HepG2 (cell line): ENCODE measurements at regions of chr20 and their contacts with region 1.

Region 1: GRCh38 chr20:64255361-64256281 is at the start of gene PCMTD2:
- DNase-seq: peak; percentile 86
- ATAC-seq: peak; percentile 89
- H3K4me3 ChIP-seq: peak within 1 kb of the TSS; percentile 68 to 94 (median 80)
- H3K27ac ChIP-seq: peak within 1 kb of the TSS; percentile 78
- H3K4me1 ChIP-seq: peaks cover 66% of the 10 kb centered on the region
- H3K27me3 ChIP-seq: no peaks in the 10 kb centered on the region; a peak in 2 of 5 replicates
- CTCF ChIP-seq: peak; percentile 52
- EP300 ChIP-seq: 0 out of 4 replicates have a peak, but pooled peaks of 1 of the 2 experiments have one; percentile 24
- POLR2A ChIP-seq: peak; percentile 75 to 99; a peak in 3 of 4 replicates
- RAD21 ChIP-seq: peak; percentile 78
- total RNA-seq, gene PCMTD2: 47.0 and 50.5 TPM in 2 replicates

Region 2: DNA sequence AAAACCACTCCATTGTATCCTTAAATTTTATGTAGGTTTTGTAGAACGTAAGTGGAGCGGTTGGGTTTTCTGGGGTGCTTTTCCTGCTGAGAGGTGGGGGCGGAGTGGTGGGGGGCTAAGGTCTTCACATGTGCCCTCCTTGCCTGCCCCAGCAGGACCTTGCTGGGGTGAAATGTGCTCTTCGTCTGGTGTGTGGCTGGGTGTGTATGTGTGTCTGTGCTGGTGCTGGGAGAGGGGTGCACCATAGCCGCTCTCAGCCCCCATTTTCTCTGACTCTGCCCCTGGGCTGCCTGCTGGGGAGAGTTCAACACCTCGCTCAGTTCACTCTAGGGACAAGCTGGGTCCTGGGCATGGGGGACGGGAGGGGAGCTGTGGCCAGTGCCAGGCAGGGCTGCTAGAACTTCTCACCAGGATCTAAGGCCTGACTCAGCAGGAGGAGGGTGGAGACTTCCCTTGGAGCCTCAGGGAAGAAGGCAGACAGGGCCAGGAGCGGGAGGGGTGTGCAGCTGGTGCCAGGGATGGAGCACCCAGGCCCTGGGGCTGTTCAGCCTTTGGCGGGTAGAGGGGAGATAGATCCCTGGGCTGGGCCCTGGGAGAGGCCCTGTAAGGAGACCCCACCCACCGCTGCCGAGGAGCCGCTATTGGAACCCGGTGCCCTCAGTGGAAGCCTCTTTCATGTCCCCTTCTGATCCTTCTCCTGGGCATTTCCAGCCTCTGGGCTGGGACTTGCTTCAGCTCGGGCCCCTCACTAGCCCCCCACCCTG is 211.0 kb before region 1 on chr20:
- CTCF ChIA-PET with region 1: no interaction called
- POLR2A ChIA-PET with region 1: no interaction called
- in situ Hi-C with region 1: no loop called
- intact Hi-C with region 1: no loop called
- DNase-seq: no peak
- ATAC-seq: no peak; the same call in 2 of the 3 replicates
- H3K4me3 ChIP-seq: peak overlapping the region in 1 of 3 experiments; percentile 45; a peak in 1 of 6 replicates
- H3K27ac ChIP-seq: no peak overlapping the region
- H3K4me1 ChIP-seq: peaks cover 56% of the 10 kb centered on the region
- H3K27me3 ChIP-seq: no peaks in the 10 kb centered on the region
- CTCF ChIP-seq: no peak
- EP300 ChIP-seq: no peak
- POLR2A ChIP-seq: no peak
- RAD21 ChIP-seq: no peak

Region 3: DNA sequence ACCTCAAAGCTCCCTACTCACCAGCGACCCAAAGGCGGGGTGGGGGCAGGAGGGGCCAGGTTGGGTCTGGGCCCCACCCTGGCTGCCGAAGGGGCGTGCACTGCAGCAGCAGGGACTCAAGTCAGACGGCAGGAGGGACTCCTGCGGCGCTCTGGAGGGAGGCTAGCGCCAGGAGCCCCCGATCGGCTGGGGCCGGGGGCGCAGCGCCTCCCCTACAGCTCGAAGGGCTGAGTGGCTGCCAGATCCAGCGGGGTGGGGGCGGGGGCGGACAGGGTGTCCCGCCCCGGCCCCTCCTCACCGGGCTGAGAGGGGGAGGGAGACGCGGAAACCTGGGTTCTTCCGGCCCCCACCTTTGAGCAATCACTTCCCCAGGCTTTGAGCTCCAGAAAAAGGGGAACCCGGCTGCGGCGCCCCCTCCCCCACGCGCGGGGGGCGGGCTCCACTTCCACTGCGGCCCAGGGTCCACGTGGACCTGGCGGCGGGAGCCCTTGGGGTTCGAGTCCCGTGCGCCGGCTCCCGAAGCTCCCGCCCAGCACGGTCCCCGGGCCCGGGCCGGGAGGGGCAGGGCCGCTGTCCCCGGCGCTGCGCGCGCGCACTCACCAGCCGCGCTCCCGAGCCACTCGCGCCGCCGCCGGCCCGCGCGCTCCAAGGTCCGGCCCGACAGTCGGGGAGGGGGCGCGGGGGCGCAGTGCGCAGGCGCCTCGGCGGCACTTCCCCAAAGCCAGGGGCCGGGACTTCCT is 176.2 kb before region 1 on chr20 and contains the start of gene RGS19:
- CTCF ChIA-PET with region 1: no interaction called
- POLR2A ChIA-PET with region 1: interaction called, 11 read pairs
- in situ Hi-C with region 1: no loop called
- intact Hi-C with region 1: no loop called
- DNase-seq: peak; percentile 70
- ATAC-seq: peak; percentile 17
- H3K4me3 ChIP-seq: peak within 1 kb of the TSS; percentile 77 to 89 (median 85)
- H3K27ac ChIP-seq: peak within 1 kb of the TSS; percentile 35
- H3K4me1 ChIP-seq: peaks cover 59% of the 10 kb centered on the region
- H3K27me3 ChIP-seq: peaks cover 5 to 15% of the 10 kb centered on the region in 2 experiments; a peak in 4 of 5 replicates
- CTCF ChIP-seq: no peak
- EP300 ChIP-seq: no peak
- POLR2A ChIP-seq: no peak; a peak in 1 of 4 replicates
- RAD21 ChIP-seq: peak; percentile 56; the same call in 1 of the 2 replicates
- total RNA-seq, gene RGS19: 10.2 and 10.7 TPM in 2 replicates

Region 4: GRCh38 chr20:64188682-64189529 is 66.7 kb before region 1 on chr20:
- CTCF ChIA-PET with region 1: no interaction called
- POLR2A ChIA-PET with region 1: interaction called, 44 read pairs
- in situ Hi-C with region 1: no loop called
- intact Hi-C with region 1: loop called (anchors 1 kb)
- DNase-seq: peak; percentile 100
- ATAC-seq: peak; percentile 91
- H3K4me3 ChIP-seq: peak overlapping the region in 1 of 3 experiments; percentile 64; a peak in 2 of 6 replicates
- H3K27ac ChIP-seq: peak overlapping the region; percentile 88
- H3K4me1 ChIP-seq: peaks cover 45% of the 10 kb centered on the region
- H3K27me3 ChIP-seq: peaks cover 3 to 6% of the 10 kb centered on the region in 2 experiments; a peak in 1 of 5 replicates
- CTCF ChIP-seq: no peak; the same call in 1 of the 2 replicates
- EP300 ChIP-seq: peak; percentile 65 to 79; a peak in 3 of 4 replicates
- POLR2A ChIP-seq: no peak
- RAD21 ChIP-seq: no peak

Region 5: GRCh38 chr20:64223526-64224067 is 32.0 kb before region 1 on chr20:
- CTCF ChIA-PET with region 1: no interaction called
- POLR2A ChIA-PET with region 1: interaction called, 47 read pairs
- in situ Hi-C with region 1: no loop called
- intact Hi-C with region 1: no loop called
- DNase-seq: peak; percentile 67
- ATAC-seq: peak; percentile 85
- H3K4me3 ChIP-seq: peak overlapping the region in 2 of 3 experiments; percentile 3 to 58; a peak in 1 of 6 replicates
- H3K27ac ChIP-seq: no peak overlapping the region
- H3K4me1 ChIP-seq: peaks cover 55% of the 10 kb centered on the region
- H3K27me3 ChIP-seq: peaks cover 26 to 86% of the 10 kb centered on the region in 2 experiments
- CTCF ChIP-seq: peak; percentile 98
- EP300 ChIP-seq: peak in 1 of 2 experiments; percentile 30; a peak in 1 of 4 replicates
- POLR2A ChIP-seq: no peak
- RAD21 ChIP-seq: peak; percentile 96

Region 6: DNA sequence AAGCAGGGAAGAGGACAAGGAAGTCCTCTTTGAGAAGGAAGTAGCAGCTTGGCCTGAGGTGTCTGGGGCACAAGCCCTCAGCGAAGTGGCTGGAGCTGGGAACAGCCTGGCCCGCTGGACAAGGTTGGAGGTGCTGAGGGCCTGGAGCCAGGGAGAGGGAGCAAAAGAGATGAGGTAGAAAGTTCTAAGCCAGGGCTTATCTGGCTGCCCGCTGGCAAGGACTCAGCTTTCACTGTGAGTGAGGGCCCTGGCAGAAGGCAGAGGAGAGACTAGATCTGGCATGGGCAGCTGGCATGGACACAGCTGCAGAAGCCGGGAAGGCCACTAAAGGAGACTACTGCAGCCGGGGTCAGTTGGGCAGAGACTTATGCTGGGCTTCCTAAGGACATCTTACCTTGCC is 21.9 kb before region 1 on chr20:
- CTCF ChIA-PET with region 1: no interaction called
- POLR2A ChIA-PET with region 1: interaction called, 157 read pairs
- in situ Hi-C with region 1: no loop called
- intact Hi-C with region 1: loop called (anchors 1 kb)
- DNase-seq: no peak
- ATAC-seq: peak; percentile 2
- H3K4me3 ChIP-seq: no peak overlapping the region
- H3K27ac ChIP-seq: no peak overlapping the region
- H3K4me1 ChIP-seq: peaks cover 57% of the 10 kb centered on the region
- H3K27me3 ChIP-seq: peaks cover under 1 to 20% of the 10 kb centered on the region in 2 experiments; a peak in 3 of 5 replicates
- CTCF ChIP-seq: no peak
- EP300 ChIP-seq: no peak
- POLR2A ChIP-seq: no peak
- RAD21 ChIP-seq: no peak

Region 7: DNA sequence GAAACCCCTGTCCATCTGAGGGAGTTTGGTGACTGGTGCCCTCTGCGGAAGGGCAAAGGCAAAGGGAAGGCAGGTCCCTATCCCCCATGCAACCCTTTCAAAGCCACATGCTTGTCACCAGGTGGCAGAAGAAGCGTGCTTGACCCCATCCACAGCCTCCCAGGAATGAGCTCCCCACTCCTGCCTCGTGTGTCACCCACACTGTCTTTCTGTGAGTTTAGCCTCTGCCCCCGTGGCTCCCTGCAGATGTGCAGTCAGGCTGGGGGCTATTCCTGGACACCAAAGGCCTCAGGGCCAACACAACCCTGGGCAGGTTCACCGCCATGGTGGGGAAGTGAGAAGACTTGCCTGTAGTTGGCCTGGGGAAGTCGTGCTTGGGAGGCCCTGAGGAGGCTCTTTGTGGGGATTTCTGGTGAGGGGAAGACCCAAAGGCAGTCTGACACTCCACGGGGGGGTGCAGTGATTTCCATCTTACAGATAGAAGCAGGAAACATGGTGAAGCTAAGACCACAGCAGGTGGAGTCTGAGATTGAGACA is 16.7 kb before region 1 on chr20:
- CTCF ChIA-PET with region 1: no interaction called
- POLR2A ChIA-PET with region 1: interaction called, 157 read pairs
- in situ Hi-C with region 1: no loop called
- intact Hi-C with region 1: loop called (anchors 1 kb)
- DNase-seq: peak; percentile 49
- ATAC-seq: peak; percentile 4; the same call in 2 of the 3 replicates
- H3K4me3 ChIP-seq: peak overlapping the region in 1 of 3 experiments; percentile 19; a peak in 2 of 6 replicates
- H3K27ac ChIP-seq: peak overlapping the region; percentile 69
- H3K4me1 ChIP-seq: peaks cover 90% of the 10 kb centered on the region
- H3K27me3 ChIP-seq: no peaks in the 10 kb centered on the region
- CTCF ChIP-seq: peak; percentile 71
- EP300 ChIP-seq: no peak
- POLR2A ChIP-seq: no peak
- RAD21 ChIP-seq: no peak